Calu3 (cell line): ENCODE measurements at regions of chr10 and their contacts with region 1.

Region 1: GRCh38 chr10:86971232-86971991 is 3.1 kb downstream of the ADIRF start:
- DNase-seq: peak; percentile 75
- H3K4me3 Mint-ChIP-seq: peak overlapping the region; percentile 74
- H3K27ac Mint-ChIP-seq: peak overlapping the region; percentile 71
- H3K4me1 Mint-ChIP-seq: peaks cover 27% of the 10 kb centered on the region
- H3K27me3 Mint-ChIP-seq: no peaks in the 10 kb centered on the region
- CTCF ChIP-seq: no peak

Region 2: DNA sequence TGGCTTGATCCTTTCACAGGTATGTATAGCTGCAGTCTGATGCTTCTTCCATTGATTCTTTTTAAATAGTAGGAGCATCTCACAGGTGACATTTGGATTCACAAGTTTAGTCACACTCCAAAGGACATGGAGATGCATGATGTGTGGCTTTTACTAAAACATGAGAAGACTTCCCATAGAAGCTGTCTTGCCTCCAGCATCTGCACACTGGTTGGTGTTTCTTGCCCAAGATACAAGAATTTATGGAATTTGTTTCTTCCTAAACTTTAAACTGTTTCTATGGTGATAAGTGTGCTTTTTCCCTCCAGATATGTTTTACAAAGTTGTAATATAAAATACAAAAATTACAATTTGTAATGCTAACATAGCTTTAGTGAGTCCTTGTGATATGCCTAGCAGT is 21.0 kb after region 1 on chr10:
- CTCF ChIA-PET with region 1: no interaction called
- intact Hi-C with region 1: no loop called
- DNase-seq: no peak
- H3K4me3 Mint-ChIP-seq: no peak overlapping the region
- H3K27ac Mint-ChIP-seq: no peak overlapping the region
- H3K4me1 Mint-ChIP-seq: no peaks in the 10 kb centered on the region
- H3K27me3 Mint-ChIP-seq: no peaks in the 10 kb centered on the region
- CTCF ChIP-seq: no peak

Region 3: DNA sequence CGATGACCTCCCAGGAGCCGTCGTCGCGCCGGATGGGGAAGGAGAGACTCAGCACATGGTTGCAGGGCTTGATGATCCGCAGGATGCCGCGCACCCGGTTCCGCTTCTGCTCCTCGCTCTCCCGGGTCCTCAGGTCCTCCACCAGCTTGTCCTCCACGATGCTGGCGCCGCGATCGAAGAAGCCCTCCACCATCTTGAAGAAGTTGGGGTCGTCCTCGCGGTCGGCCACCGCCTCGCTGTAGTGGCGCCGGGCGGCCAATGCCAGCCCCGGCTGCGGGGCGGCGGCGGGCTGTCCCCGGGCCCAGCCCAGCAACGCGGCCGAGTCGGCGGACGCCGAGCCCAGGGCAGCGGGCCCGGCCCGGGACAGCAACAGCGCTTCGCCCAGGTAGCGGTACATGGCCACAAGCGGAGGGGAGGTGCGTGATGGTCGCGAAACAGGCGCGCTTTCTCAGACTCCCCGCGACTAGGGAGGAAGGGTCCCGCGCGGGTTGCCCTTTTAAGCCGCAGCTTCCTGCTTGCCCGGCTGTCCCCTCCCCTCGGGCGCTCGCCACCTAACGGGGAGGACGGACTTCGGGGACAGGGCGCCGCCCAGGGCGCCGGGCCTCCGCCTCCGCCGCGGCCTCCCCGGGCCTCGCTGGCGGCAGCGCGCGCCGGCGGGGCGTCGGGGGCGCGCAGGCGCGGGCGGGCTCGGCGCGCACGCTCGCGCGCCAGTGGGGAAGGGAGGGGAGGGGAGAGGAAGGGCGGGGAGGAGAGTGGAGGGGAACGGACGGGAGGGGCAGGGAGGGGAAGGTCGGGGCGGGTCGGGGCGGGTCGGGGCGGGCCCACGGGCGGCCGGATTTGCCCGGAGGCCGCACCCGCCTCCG is 123.2 kb after region 1 on chr10 and contains the starts of genes GLUD1 and SHLD2:
- CTCF ChIA-PET with region 1: no interaction called
- intact Hi-C with region 1: loop called (anchors 5 kb)
- DNase-seq: peak; percentile 90
- H3K4me3 Mint-ChIP-seq: peak within 1 kb of the TSS; percentile 65
- H3K27ac Mint-ChIP-seq: peak within 1 kb of the TSS; percentile 68
- H3K4me1 Mint-ChIP-seq: peaks cover 9% of the 10 kb centered on the region
- H3K27me3 Mint-ChIP-seq: no peaks in the 10 kb centered on the region
- CTCF ChIP-seq: no peak
- total RNA-seq, gene GLUD1: 60.2 and 70.8 TPM in 2 replicates
- total RNA-seq, gene SHLD2: 11.4 and 11.5 TPM in 2 replicates